Posterior vena cava (tissue), 2 donors: ENCODE measurements at regions of chr4 and their contacts with region 1.

Region 1: DNA sequence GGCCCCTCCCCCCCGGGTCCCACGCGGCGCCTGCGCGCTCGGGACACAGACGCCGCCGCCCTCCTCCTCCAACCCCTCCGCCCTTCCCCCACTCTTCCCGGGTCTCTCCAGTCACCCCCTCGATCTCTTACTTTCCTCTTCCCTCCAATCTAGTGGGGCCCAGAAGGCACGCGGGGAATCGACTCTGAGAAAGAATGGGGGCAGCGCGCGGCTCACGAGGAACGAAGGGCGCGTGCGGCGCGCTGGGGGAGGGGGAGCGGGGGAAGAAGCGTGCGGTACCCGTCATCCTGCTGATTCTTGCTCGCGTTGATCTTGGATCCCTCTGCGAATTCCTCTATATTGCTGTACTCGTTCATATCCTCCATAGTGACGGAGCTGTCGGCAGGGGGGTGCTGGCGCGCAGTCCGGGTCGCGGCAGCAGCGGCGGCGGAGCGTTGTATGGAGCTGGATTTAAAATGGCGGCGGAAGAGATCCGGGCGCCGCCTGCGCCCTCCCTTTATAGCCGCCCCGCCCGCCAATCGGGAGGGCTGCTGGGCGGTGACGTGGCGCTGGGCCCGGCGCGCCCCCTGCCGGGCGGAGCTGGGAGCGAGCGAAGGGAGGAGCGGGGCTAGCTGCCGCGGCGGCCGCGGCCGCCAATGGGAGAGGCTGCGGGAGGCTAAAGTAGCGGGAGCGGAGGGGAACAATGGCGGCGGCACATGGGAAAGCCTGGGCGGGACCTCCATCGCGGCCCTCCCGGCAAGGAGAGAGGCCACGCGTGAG is 1.1 kb downstream of the HNRNPDL start:
- DNase-seq: peak; percentile 98

Region 2: GRCh38 chr4:80538276-80538926 is 1890.7 kb before region 1 on chr4:
- intact Hi-C with region 1: loop called in 1 of 2 experiments (anchors 5 kb)
- DNase-seq: no peak

Region 3: GRCh38 chr4:82149750-82150149 is 279.4 kb before region 1 on chr4:
- intact Hi-C with region 1: no loop called
- DNase-seq: no peak

Region 4: GRCh38 chr4:82373816-82374625 is 55.1 kb before region 1 on chr4 and contains the start of gene HNRNPD:
- intact Hi-C with region 1: loop called in 1 of 2 experiments (anchors 5 kb)
- DNase-seq: peak; percentile 99
- total RNA-seq, gene HNRNPD: 97.1 to 111 TPM